ENCODE measurements at regions of chr5 and their contacts with region 1.

Region 1: GRCh38 chr5:141618804-141619554 is at the start of gene DIAPH1:
- DNase-seq: peak; percentile 71 to 96 (median 89)

Region 2: GRCh38 chr5:141475625-141476131 is 143.3 kb before region 1 on chr5 and contains the start of gene PCDHGC3:
- intact Hi-C with region 1: no loop called
- DNase-seq: peak; percentile 73 to 96 (median 89)

Region 3: DNA sequence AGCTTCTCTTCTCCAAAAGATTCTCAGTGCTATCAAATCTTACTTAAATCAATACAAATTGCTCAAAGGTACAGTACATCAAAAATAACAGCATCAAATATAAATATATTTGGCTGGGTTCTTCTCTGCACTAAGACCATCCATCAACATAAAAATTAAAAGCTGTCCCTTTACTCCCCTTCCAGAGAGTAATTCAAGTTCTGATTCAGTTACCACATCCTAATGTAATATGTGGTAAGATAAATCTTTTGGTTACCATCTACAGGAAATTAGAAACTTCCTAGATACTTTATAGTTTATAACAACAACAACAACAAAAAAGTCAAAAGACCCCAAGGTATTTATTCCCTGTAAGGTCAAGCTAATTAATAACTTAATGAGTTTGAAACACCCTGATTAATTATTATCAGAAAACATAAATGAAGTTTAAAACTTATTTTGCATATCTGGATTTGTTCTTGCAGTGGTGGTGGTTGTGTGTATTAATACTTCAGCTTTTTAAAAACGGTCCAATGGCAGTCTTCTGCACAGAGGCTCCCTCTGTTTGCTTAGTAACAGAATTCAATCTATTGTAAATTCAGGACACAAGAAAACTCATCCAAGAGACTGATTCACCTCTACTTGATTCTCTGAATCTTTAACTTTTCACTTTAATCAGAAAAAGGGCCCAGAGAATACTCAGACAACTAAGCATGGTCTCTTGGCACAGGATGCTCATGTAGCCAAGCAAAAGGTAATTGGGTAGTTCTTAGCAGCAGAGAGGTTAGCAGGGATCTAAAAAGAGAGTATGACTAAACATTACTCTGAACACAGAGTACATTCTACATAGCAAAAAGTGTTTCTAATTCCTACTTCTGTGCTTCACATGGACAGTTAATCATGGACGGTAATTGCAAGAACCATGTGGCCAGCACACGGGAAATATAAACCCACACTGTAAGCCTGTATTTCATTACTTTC is 20.3 kb before region 1 on chr5:
- intact Hi-C with region 1: loop called (anchors 2 kb)
- DNase-seq: no peak

Region 4: DNA sequence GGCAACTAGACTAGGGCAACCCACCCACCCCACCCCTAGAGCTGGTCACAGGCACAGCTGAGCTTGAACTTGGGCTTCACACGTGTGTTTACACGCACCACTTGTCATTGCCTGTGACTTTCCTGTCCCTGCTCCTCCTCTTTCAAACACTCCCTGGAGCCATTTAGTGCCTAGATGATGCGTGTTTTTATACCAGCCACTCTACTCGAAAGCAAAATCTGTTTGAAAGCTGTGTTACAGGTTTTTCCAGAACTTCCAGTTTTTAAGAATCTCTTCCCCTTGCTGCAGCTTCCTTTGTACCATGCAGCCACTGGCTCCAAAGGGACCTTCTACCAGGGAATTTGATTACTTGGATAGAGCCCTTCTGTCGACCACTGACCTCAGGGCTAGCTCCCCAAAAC is 784.6 kb after region 1 on chr5:
- intact Hi-C with region 1: no loop called
- DNase-seq: no peak